Activated T-helper 2 cell treated with anti-CD3 and anti-CD28 coated beads, Interferon-gamma antibody, Interleukin-2, Interleukin-4, amounts not matched to agents 10 μg/mL and 5 μg/mL and 100 μg/mL, durations not matched to agents 14 hours and 24 hours and 36 hours (primary cell): ENCODE measurements at regions of chr9 and their contacts with region 1.

Region 1: DNA sequence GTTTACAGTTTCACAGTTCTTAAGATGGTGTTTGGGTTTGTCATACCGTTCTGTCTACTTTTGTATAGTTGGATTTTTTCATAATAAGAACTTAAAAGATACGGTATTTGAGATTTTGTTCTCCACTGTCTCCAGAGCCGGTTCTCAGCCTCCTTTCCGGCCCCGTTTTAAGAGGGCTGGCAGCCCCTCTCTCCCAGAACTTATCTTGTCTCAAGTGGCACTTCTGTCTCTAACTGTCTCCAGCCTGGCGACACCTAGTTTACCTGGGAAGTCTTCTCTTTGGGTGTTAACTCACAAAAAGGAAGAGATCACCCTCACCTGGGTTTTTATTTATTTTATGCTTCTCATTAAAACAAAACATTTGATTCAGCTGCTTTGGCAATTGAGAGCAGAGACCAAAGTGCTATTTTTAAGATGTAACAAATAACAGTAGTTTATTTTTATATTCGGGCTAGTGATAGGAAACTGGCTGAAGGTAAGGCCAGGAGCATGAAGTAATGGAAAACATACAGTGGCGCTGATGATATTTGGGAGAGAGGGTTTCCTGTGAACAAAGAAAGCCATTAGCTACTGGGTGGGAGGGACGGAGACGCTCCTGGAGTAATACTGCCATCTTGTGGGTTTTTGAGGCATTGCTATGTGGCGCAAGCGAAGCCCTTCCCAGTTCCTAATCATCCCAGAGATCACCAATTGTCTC is 48.3 kb downstream of the ACER2 start:
- DNase-seq: peak; percentile 58
- H3K4me3 Mint-ChIP-seq: peak overlapping the region; percentile 63
- H3K27ac Mint-ChIP-seq: no peak overlapping the region
- H3K4me1 Mint-ChIP-seq: peaks cover 10% of the 10 kb centered on the region
- H3K27me3 Mint-ChIP-seq: peaks cover 1% of the 10 kb centered on the region

Region 2: GRCh38 chr9:18442629-18443491 is 1014.3 kb before region 1 on chr9:
- intact Hi-C with region 1: loop called (anchors 10 kb)
- DNase-seq: peak; percentile 27
- H3K4me3 Mint-ChIP-seq: no peak overlapping the region
- H3K27ac Mint-ChIP-seq: no peak overlapping the region
- H3K4me1 Mint-ChIP-seq: no peaks in the 10 kb centered on the region
- H3K27me3 Mint-ChIP-seq: peaks cover 12% of the 10 kb centered on the region

Region 3: GRCh38 chr9:19074836-19075235 is 382.3 kb before region 1 on chr9:
- intact Hi-C with region 1: no loop called
- DNase-seq: no peak
- H3K4me3 Mint-ChIP-seq: no peak overlapping the region
- H3K27ac Mint-ChIP-seq: peak overlapping the region; percentile 1
- H3K4me1 Mint-ChIP-seq: peaks cover 4% of the 10 kb centered on the region
- H3K27me3 Mint-ChIP-seq: no peaks in the 10 kb centered on the region

Region 4: GRCh38 chr9:19085295-19085694 is 371.8 kb before region 1 on chr9:
- intact Hi-C with region 1: loop called (anchors 2 kb)
- DNase-seq: no peak
- H3K4me3 Mint-ChIP-seq: no peak overlapping the region
- H3K27ac Mint-ChIP-seq: peak overlapping the region; percentile 18
- H3K4me1 Mint-ChIP-seq: peaks cover 4% of the 10 kb centered on the region
- H3K27me3 Mint-ChIP-seq: no peaks in the 10 kb centered on the region

Region 5: GRCh38 chr9:19184144-19184917 is 272.8 kb before region 1 on chr9:
- intact Hi-C with region 1: no loop called
- DNase-seq: peak; percentile 69
- H3K4me3 Mint-ChIP-seq: peak overlapping the region; percentile 37
- H3K27ac Mint-ChIP-seq: peak overlapping the region; percentile 92
- H3K4me1 Mint-ChIP-seq: peaks cover 19% of the 10 kb centered on the region
- H3K27me3 Mint-ChIP-seq: no peaks in the 10 kb centered on the region

Region 6: DNA sequence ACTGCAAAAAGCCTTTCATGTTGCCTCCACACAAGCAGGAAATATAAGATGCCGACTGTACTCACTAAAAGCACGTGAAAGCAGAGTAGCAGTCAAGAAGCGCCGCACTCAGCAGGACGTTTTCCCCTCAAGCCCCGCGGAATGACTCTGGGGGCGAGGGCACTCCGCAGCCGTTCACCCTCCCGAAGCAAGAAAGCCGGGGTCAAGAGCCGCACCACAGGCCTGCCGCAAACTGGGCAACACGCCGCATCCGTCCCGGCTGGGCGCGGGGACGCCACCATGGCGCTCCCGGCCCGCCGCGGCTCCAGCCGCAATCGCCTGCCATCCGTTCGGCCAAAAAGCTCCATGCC is 77.5 kb before region 1 on chr9:
- intact Hi-C with region 1: loop called (anchors 1 kb)
- DNase-seq: no peak
- H3K4me3 Mint-ChIP-seq: peak overlapping the region; percentile 96
- H3K27ac Mint-ChIP-seq: peak overlapping the region; percentile 98
- H3K4me1 Mint-ChIP-seq: peaks cover 38% of the 10 kb centered on the region
- H3K27me3 Mint-ChIP-seq: no peaks in the 10 kb centered on the region

Region 7: GRCh38 chr9:19587678-19588077 is 130.5 kb after region 1 on chr9:
- intact Hi-C with region 1: no loop called
- DNase-seq: no peak
- H3K4me3 Mint-ChIP-seq: no peak overlapping the region
- H3K27ac Mint-ChIP-seq: no peak overlapping the region
- H3K4me1 Mint-ChIP-seq: no peaks in the 10 kb centered on the region
- H3K27me3 Mint-ChIP-seq: peaks cover 13% of the 10 kb centered on the region